ENCODE measurements at regions of chr2 and their contacts with region 1.

Region 1: GRCh38 chr2:101004671-101005325 is 2.7 kb downstream of the RPL31 start:
- DNase-seq: no peak
- H3K4me3 ChIP-seq: no peak overlapping the region
- H3K27ac ChIP-seq: no peak overlapping the region
- H3K4me1 ChIP-seq: peaks cover 0 to 21% (median 12%) of the 10 kb centered on the region in 4 donors
- H3K27me3 ChIP-seq: no peaks in the 10 kb centered on the region
- CTCF ChIP-seq: no peak

Region 2: GRCh38 chr2:101151141-101151858 is 146.5 kb after region 1 on chr2 and contains the start of gene TBC1D8:
- intact Hi-C with region 1: loop called (anchors 2 kb)
- DNase-seq: peak; percentile 85 to 95
- H3K4me3 ChIP-seq: peak within 1 kb of the TSS; percentile 90 to 92
- H3K27ac ChIP-seq: peak within 1 kb of the TSS; percentile 74 to 80
- H3K4me1 ChIP-seq: peaks cover 0 to 44% (median 26%) of the 10 kb centered on the region in 4 donors
- H3K27me3 ChIP-seq: no peaks in the 10 kb centered on the region
- CTCF ChIP-seq: no peak

Region 3: DNA sequence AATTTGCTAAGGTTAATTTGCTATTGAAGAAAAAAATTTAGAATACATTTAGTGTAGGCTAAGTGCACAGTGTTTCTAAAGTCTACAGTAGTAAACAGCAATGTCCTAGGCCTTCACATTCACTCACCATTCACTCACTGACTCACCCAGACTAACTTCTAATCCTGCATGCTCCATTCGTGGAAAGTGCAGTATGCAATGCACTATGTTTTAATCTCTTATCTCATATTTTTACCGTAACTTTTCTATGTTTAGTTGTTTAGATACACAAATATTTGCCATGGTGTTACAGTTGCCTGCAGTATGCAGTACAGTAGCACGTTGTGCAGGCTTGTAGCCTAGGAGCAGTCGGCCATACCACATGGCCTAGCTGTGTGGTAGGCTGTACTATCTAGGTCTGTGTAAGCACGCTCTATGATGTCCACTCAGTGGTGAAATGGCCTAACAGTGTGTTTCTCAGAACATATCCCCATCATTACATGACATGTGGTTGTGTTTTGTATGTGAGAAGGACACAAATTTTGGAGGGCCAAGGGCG is 488.2 kb after region 1 on chr2:
- intact Hi-C with region 1: no loop called
- DNase-seq: no peak
- H3K4me3 ChIP-seq: no peak overlapping the region
- H3K27ac ChIP-seq: no peak overlapping the region
- H3K4me1 ChIP-seq: no peaks in the 10 kb centered on the region
- H3K27me3 ChIP-seq: no peaks in the 10 kb centered on the region
- CTCF ChIP-seq: no peak

Measured in tibial artery (tissue), 4 donors.